ENCODE measurements at regions of chr22 and their contacts with region 1.

Region 1: DNA sequence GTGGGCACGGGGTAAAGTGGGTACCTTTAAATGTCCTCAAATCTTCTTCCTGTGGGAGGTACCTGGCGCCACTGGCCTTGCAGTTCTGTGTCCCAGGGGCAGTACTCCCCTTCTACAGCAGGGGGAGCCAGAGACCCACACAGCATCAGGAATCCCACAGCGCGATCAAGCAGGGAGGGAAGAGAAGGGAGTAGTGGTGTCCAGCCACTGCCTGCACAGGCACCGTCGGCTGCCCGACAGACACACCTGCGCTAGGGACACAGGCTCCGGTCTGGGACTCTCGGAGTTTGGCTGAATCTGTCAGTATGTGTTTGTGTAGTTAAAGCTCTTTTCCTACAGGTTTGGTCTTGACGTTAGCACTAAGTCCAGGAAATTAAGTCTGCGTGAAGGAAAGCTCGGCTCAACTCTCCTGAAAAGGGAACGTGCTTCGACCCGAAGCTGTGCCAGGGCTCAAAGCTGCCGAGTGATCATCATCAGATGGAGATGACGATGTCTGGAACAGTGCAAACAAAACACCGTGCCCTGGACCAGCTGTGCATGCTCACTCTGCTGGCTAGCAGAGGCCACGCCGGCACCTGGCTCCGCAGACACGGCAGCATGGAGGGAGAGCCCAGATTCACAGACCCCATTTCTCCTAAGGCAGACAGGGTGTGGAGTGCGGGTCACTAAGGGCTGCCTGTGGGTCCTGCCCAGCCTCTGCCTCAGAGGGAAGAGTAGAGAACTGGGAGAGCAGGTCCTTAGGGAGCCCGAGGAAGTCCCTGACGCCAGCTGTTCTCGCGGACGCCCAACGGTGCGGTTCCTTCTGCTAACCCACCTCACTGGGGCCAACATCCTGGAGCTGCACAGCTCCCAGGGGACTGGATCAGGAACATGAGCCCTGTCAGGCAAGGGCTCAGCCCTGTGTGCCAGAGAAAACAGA is 56.0 kb upstream of the BID start:
- DNase-seq: peak; percentile 81 to 98
- H3K4me3 ChIP-seq: no peak overlapping the region
- H3K27ac ChIP-seq: no peak overlapping the region
- H3K4me1 ChIP-seq: no peaks in the 10 kb centered on the region
- H3K27me3 ChIP-seq: no peaks in the 10 kb centered on the region
- CTCF ChIP-seq: peak; percentile 94 to 100 (median 98)
- EP300 ChIP-seq: no peak
- POLR2A ChIP-seq: no peak
- RAD21 ChIP-seq: peak; percentile 95 to 99

Region 2: DNA sequence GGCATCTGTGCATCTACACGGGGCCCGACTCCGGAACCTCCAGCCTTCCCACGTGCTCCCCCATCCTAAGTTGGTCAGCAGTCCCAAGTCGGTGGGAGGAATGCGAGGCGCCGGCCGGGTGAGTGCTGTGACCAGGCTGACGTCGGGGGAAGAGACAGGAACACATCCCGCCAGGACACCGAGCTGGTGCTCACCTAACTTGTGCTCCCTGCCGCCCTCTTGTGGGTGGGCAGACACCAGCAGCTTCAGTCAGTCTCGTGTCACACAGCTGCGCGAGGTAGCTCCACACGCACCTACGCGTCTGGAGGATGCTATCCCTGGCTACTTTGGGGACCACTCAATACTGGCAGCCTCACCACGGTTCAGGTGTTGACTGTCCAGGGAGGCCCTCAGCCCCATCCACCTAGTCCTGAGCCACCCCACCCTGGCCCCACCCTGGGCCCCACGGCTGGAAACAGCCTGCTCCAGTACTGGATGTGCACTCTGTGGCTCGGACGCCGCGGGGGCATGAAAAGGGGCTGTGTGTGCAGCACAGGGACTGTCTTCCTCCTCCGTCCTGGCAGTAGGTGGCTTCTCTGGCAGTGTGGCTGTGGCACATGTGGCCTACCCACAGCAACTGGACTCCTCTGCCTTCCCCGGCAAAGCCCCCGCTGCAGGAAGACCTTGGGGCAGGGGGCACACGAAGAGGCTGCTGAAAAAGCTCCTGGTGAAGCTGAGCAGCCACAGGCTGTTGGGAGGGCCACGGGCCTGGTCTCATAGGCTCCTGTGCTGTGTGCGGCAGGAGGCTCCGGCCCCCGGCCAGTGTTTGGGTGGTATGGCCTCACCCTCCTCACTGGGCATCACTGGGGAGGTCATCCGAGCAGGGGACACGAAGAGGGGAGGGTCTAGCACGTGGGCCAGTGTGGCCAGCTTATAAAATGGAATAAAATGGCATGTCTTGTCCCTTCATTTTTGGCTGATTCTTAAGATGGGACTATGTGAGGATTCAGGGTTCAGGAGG is 44.8 kb before region 1 on chr22:
- CTCF ChIA-PET with region 1: interaction called, 18 read pairs
- POLR2A ChIA-PET with region 1: no interaction called
- DNase-seq: peak; percentile 74 to 96
- H3K4me3 ChIP-seq: no peak overlapping the region
- H3K27ac ChIP-seq: no peak overlapping the region
- H3K4me1 ChIP-seq: peaks cover 0 to 5% (median under 1%) of the 10 kb centered on the region in 4 experiments; a peak in 1 of 7 replicates
- H3K27me3 ChIP-seq: no peaks in the 10 kb centered on the region
- CTCF ChIP-seq: peak; percentile 89 to 99 (median 98)
- EP300 ChIP-seq: no peak
- POLR2A ChIP-seq: no peak
- RAD21 ChIP-seq: peak; percentile 74 to 79

Region 3: DNA sequence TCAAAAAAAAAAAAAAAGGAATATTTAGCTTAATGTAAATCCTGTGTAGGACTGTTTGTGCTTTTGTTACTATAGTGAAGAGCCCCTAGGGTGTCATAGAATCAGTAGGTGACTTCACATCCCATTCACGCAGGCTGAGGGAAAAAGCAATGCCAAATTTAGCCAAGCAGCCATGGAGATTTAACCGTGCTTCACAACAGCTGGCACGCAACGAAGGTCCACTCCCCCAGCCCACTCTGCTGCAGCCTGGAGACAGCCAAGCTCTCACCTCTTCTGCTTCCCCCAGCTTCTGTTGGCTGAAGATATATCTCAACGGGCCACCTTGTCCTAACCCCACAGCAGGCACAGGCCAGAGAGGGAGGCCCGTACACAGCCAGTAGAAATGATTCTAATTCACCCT is 22.8 kb after region 1 on chr22:
- CTCF ChIA-PET with region 1: interaction called, 18 read pairs
- POLR2A ChIA-PET with region 1: interaction called, 3 read pairs
- DNase-seq: no peak
- H3K4me3 ChIP-seq: no peak overlapping the region
- H3K27ac ChIP-seq: no peak overlapping the region
- H3K4me1 ChIP-seq: no peaks in the 10 kb centered on the region
- H3K27me3 ChIP-seq: no peaks in the 10 kb centered on the region
- CTCF ChIP-seq: no peak
- EP300 ChIP-seq: no peak
- POLR2A ChIP-seq: no peak
- RAD21 ChIP-seq: no peak

Region 4: DNA sequence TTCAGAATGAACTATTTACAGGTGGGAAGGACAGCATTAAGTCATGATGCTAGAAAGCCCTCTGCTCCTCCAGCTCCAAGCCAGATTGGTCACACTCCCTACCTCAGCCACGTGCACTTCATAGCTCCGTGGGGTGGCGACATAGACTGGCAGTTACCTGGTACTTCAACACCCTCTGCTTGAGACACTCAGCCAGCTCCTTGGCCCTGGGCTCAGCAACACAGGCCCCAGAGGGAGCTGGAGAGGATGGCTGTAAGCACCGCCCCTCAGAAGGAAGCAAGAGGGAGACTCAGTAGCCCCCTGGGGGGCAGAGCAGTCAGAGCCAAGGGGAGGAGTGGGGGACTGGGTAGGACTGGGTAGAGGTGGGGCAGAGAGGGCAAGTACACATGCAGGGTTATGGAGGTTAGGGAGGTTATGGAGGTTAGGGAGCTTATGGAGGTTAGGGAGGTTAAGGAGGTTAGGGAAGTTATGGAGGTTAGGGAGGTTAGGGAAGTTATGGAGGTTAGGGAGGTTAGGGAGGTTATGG is 46.1 kb after region 1 on chr22:
- CTCF ChIA-PET with region 1: interaction called, 17 read pairs
- POLR2A ChIA-PET with region 1: no interaction called
- DNase-seq: no peak
- H3K4me3 ChIP-seq: no peak overlapping the region
- H3K27ac ChIP-seq: no peak overlapping the region
- H3K4me1 ChIP-seq: no peaks in the 10 kb centered on the region
- H3K27me3 ChIP-seq: peaks cover 11 to 70% (median 58%) of the 10 kb centered on the region in 4 experiments
- CTCF ChIP-seq: no peak
- EP300 ChIP-seq: no peak
- POLR2A ChIP-seq: no peak
- RAD21 ChIP-seq: no peak

Region 5: GRCh38 chr22:17903564-17904295 is 73.4 kb after region 1 on chr22:
- CTCF ChIA-PET with region 1: interaction called, 12 read pairs
- POLR2A ChIA-PET with region 1: no interaction called
- DNase-seq: peak in 1 of 2 experiments; percentile 54
- H3K4me3 ChIP-seq: no peak overlapping the region; a peak in 1 of 8 replicates
- H3K27ac ChIP-seq: no peak overlapping the region
- H3K4me1 ChIP-seq: peaks cover 3 to 8% (median 7%) of the 10 kb centered on the region in 4 experiments; a peak in 5 of 7 replicates
- H3K27me3 ChIP-seq: no peaks in the 10 kb centered on the region
- CTCF ChIP-seq: 0 out of 4 replicates have a peak, but pooled peaks of 1 of the 3 experiments have one; percentile 6
- EP300 ChIP-seq: no peak
- POLR2A ChIP-seq: no peak
- RAD21 ChIP-seq: no peak; a peak in 1 of 4 replicates